HEK293 (cell line): ENCODE measurements at regions of chr16 and their contacts with region 1.

Region 1: GRCh38 chr16:18969050-18969854 is 14.5 kb upstream of the TMC7 start:
- H3K4me3 ChIP-seq: peak overlapping the region; percentile 9; the same call in 1 of the 2 replicates
- H3K27ac ChIP-seq: no peak overlapping the region
- H3K4me1 ChIP-seq: no peaks in the 10 kb centered on the region
- CTCF ChIP-seq: peak; percentile 71

Region 2: GRCh38 chr16:18945233-18945632 is 24.0 kb before region 1 on chr16:
- CTCF ChIA-PET with region 1: interaction called, 12 read pairs
- POLR2A ChIA-PET with region 1: no interaction called
- H3K4me3 ChIP-seq: no peak overlapping the region
- H3K27ac ChIP-seq: no peak overlapping the region
- H3K4me1 ChIP-seq: 0 out of 2 replicates have a peak, but pooled peaks cover 2% of the 10 kb centered on the region
- CTCF ChIP-seq: no peak

Region 3: DNA sequence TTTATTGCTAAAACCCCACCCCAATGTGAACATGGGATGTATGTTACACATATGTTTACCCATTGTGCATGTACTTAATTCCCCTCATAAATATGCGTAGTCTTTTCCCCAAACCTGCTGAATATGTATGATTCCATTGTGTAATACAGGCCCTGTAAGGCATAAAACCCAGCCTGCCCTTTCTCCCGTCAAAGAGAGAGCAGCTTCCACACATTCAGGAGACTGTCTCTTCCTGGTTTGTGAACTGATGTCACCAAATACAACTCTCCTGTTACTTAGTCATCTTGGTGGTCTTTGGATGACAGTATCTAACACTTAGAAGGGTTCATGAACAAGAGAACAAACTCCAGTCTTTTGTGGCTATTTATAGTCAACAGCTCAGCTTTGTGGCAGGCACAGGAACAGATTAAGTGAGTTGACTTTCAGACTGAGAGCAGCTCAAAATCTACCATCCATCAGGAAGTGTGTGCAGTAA is 10.2 kb before region 1 on chr16:
- CTCF ChIA-PET with region 1: interaction called, 14 read pairs
- POLR2A ChIA-PET with region 1: no interaction called
- H3K4me3 ChIP-seq: no peak overlapping the region
- H3K27ac ChIP-seq: no peak overlapping the region
- H3K4me1 ChIP-seq: peaks cover 6% of the 10 kb centered on the region; the same call in 1 of the 2 replicates
- CTCF ChIP-seq: no peak

Region 4: DNA sequence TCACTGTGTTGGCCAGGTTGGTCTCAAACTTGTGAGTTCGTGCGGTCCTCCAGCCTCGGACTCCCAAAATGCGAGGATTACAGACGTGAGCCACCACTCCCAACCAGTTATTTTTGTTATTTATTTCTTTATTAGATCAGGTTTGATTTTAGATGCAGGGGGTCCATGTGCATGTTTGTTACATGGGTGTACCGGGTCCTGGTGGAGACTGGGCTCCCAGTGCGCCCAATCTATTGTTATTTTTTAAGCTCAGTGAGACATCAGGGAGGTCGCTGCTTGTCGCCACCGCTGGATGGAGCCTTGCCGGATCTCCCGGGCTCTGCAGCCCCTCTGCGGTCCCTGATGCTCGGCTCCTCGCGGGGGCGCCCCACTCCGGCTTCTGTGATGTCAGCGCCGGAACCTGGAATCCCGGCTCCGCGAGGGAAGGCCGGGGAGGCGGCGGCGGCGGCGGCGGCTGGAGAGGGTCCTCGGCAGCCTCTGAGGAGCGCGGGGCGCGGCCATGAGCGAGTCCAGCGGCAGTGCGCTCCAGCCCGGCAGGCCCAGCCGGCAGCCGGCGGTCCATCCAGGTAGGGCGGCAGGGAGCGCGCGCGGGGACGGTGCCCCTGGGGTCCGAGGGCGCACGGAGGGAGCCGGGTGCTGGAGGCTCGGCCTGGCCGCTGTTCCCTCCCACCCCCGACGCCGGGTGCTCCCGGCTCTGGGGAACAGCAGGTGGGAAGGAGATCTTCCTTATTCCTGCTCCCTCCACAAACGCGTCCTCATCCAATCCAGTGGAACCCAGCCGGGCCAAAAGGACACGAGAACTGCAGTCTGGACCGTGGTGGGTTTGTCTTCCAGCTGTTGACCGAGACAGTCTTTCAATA is 14.5 kb after region 1 on chr16 and contains the start of gene TMC7:
- CTCF ChIA-PET with region 1: interaction called, 10 read pairs
- POLR2A ChIA-PET with region 1: no interaction called
- H3K4me3 ChIP-seq: peak within 1 kb of the TSS; percentile 66
- H3K27ac ChIP-seq: peak within 1 kb of the TSS; percentile 38; the same call in 1 of the 2 replicates
- H3K4me1 ChIP-seq: no peaks in the 10 kb centered on the region
- CTCF ChIP-seq: peak; percentile 95